Heart right ventricle (tissue), 16 donors: ENCODE measurements at regions of chr2 and their contacts with region 1.

Region 1: DNA sequence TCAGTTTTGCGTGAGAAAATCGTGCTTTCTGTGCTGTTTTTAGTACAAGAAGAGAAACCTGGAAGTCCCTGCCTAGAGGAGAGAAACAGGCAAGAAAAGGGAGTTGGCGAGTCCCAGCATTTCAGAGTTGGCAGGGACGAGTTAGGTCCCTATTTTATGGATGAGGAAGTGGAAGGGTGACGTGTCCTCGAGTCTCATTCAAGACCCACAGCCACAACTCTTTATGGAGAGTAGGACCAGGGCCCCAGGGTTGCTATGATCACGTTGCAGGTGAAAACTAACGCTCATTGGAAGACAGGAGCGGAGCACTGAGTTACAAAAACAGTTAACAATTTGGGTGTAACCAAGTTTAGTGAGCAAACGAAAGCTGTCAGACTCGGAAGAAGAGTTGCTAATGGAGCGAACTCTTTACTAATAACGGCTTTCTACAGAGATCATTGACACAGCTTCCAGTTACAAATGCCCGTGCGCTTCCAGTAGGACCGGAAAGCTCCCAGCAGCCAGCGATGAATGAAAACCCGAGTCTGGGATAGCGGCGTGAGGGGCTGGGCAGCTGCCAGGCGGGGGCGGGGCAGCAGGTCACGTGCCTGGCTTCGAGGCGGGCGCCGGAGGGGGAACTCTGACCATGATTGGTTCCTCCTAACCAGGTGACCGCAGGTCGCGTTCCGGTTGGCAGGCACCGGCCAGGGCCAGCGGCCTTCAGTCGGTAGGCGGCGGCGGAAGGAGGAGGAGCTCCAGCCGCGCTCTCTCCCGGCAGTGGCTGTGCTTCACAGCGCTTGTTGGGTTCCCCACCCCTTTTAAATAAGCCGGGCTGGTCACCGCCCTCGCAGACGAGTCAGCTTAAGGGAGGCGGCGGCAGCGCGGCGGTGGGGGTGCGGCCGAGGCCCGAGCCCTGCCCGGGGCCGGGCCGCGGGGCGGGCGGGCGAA is at the start of gene CCNYL1:
- DNase-seq: peak; percentile 98 to 99
- ATAC-seq: peak; percentile 99 to 100 (median 100)
- H3K4me3 ChIP-seq: peak within 1 kb of the TSS; percentile 75 to 98 (median 91)
- H3K27ac ChIP-seq: peak within 1 kb of the TSS; percentile 51 to 95 (median 91)
- H3K4me1 ChIP-seq: peaks cover 2 to 28% (median 22%) of the 10 kb centered on the region in 9 donors
- H3K27me3 ChIP-seq: no peaks in the 10 kb centered on the region
- CTCF ChIP-seq: peak in 7 of 9 donors; percentile 17 to 54 (median 47)
- total RNA-seq, gene CCNYL1: 5.6 to 16.1 (median 9.7) TPM

Region 2: DNA sequence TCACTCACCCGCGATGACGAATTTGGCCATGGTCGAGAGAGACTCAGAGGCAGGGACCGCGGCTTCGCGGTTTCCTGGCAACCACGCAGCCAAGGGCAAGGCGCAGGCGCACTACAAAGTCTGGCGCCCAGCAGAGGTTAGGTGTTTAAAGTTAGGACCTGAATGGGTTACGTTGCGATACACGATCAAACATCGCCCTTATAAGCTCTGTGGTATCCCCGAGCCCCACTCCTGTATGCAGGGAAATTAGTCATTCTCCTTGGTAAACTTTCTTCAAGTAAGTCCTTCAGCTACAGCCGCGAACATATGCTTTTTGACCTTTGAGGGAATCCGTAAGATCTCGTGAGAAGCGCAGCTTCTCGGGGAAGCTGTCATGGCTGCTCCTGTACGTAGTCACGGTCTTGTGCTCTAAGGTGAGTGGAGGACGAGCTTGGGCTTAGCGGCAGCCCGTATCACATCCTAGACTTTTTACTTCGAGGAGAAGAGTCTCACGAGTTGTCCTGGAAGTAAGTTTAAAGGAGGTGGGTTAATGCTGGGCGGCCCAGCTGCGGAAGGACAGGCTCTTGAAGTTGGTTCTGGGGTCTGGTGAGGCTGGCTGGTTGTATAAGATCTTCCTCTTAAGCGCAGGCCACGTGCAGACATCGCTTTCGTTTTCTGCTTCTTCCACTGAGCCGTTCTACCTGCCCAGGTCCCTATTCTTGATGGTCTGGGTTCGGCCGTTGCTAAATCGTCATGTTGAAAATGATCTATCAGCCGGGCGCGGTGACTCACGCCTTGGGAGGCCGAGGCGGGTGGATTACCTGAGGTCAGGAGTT is 945.6 kb before region 1 on chr2 and contains the starts of genes FASTKD2 and MDH1B:
- intact Hi-C with region 1: loop called in 1 of 10 experiments (anchors 10 kb)
- DNase-seq: peak; percentile 87 to 88
- ATAC-seq: peak; percentile 96 to 99 (median 98)
- H3K4me3 ChIP-seq: peak within 1 kb of the TSS; percentile 61 to 86 (median 78)
- H3K27ac ChIP-seq: peak within 1 kb of the TSS; percentile 79 to 92 (median 88)
- H3K4me1 ChIP-seq: peaks cover 0 to 46% (median 33%) of the 10 kb centered on the region in 9 donors
- H3K27me3 ChIP-seq: no peaks in the 10 kb centered on the region
- CTCF ChIP-seq: no peak
- total RNA-seq, gene FASTKD2: 36.3 to 46.9 (median 42.6) TPM
- total RNA-seq, gene MDH1B: 0.76 to 2.8 (median 1.1) TPM

Region 3: DNA sequence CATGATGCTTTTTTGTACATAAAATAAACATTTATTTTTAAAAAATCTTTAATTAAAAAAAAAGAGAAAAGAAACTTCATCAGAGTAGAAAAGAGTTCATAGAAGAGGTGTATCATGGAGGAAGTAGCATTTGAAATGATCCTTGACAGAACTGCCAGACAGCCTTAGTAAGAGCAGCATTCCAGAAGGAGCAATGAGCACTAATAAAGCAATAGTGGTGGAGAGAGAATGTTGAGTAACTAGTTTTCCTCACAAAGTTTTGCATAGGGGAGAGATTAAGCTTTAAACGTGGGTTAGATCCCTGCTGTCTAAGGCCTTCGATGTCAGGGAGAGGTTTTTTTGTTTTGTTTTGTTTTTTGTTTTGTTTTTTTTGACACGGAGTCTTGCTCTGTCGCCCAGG is 56.1 kb before region 1 on chr2:
- intact Hi-C with region 1: loop called in 1 of 10 experiments (anchors 10 kb)
- DNase-seq: no peak
- ATAC-seq: no peak
- H3K4me3 ChIP-seq: no peak overlapping the region
- H3K27ac ChIP-seq: no peak overlapping the region
- H3K4me1 ChIP-seq: no peaks in the 10 kb centered on the region
- H3K27me3 ChIP-seq: no peaks in the 10 kb centered on the region
- CTCF ChIP-seq: no peak

Region 4: DNA sequence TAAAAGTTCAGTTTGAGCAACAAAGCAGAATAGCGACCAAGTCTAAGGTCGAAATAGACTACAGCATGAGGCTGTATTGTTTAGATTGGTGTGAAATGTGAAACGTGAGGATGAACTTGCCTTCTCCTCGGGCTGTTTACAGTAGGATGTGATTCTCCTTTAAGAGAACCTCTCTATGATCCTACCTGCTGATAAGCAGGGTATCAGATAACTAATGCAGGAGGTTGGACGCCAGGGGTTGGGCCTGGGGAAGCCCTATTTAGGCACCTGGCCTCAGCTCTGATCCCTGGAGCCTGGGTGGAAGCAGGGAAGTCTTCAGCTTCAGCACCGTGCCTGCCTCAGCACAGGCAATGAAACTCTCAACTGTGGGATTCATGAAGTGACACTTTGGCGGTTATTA is 401.9 kb after region 1 on chr2:
- intact Hi-C with region 1: no loop called
- DNase-seq: no peak
- ATAC-seq: no peak
- H3K4me3 ChIP-seq: no peak overlapping the region
- H3K27ac ChIP-seq: no peak overlapping the region
- H3K4me1 ChIP-seq: no peaks in the 10 kb centered on the region
- H3K27me3 ChIP-seq: peaks cover 0 to 42% (median 31%) of the 10 kb centered on the region in 7 donors
- CTCF ChIP-seq: no peak